ENCODE measurements at regions of chr15 and their contacts with region 1.

Region 1: GRCh38 chr15:51162865-51163762 is 68.4 kb upstream of the TNFAIP8L3 start:
- DNase-seq: peak; percentile 43 to 81
- H3K4me3 ChIP-seq: no peak overlapping the region
- H3K4me1 ChIP-seq: no peaks in the 10 kb centered on the region
- H3K27me3 ChIP-seq: peaks cover 9% of the 10 kb centered on the region

Region 2: GRCh38 chr15:51390966-51391432 is 227.9 kb after region 1 on chr15:
- in situ Hi-C with region 1: loop called (anchors 10 kb)
- DNase-seq: no peak
- H3K4me3 ChIP-seq: no peak overlapping the region
- H3K4me1 ChIP-seq: no peaks in the 10 kb centered on the region
- H3K27me3 ChIP-seq: no peaks in the 10 kb centered on the region

Measured in HAP-1 (cell line).